Left colon (tissue), 2 donors: ENCODE measurements at regions of chr14 and their contacts with region 1.

Region 1: DNA sequence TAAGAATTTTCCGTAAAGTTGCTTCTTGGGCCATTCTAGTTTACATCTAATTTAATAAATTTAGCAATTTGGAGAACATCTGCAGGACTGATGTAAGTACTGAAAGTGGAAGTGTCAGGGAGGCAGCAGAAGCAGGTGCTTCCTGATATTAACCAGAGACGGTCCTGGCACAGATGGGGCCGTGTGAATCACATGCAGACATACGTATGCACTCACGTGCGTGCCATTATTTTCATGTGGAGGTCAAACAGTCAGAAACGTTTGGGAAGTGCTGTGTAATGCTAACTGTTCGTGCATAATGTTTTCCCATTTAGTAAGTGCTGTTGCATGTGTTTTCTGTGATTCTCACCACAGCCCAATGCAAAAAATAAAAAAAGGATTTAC is 87.8 kb upstream of the DYNC1H1 start:
- DNase-seq: peak; percentile 80 to 90
- ATAC-seq: peak; percentile 86

Region 2: GRCh38 chr14:101761032-101761880 is 115.3 kb before region 1 on chr14 and contains the start of gene PPP2R5C:
- intact Hi-C with region 1: loop called in 1 of 2 experiments (anchors 10 kb)
- DNase-seq: peak; percentile 94
- ATAC-seq: peak; percentile 76
- total RNA-seq, gene PPP2R5C: 139 to 144 TPM